HCT116 (cell line): ENCODE measurements at regions of chr17 and their contacts with region 1.

Region 1: GRCh38 chr17:68457539-68458259 is 403 bp upstream of the WIPI1 start:
- DNase-seq: peak; percentile 98
- ATAC-seq: peak; percentile 86
- H3K4me3 ChIP-seq: peak overlapping the region; percentile 39 to 57
- H3K27ac ChIP-seq: no peak overlapping the region
- H3K4me1 ChIP-seq: peaks cover 21 to 39% of the 10 kb centered on the region in 2 experiments
- H3K27me3 ChIP-seq: no peaks in the 10 kb centered on the region
- CTCF ChIP-seq: no peak
- POLR2A ChIP-seq: no peak
- RAD21 ChIP-seq: no peak

Region 2: DNA sequence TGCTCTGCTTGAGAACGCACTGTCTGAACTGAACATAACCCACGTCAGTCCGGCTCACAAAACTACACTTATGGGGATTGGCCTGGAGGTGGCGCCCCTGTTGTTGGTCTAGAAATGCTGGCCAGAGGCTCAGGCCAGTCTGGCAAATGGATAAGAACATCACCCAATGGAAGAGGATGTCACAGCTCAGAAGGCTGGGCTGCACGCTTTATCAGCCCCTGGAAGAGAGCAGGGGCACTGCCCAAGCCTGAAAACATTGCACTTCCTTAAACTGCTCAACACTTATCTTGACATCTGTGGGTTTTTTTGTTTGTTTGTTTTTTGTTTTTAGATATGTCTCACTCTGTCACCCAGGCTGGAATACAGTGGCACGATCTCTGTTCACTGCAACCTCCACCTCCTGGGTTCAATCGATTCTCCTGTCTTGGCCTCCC is 657.2 kb before region 1 on chr17:
- CTCF ChIA-PET with region 1: no interaction called
- POLR2A ChIA-PET with region 1: no interaction called
- RAD21 ChIA-PET with region 1: no interaction called
- intact Hi-C with region 1: loop called (anchors 10 kb)
- DNase-seq: peak; percentile 83
- ATAC-seq: peak; percentile 98
- H3K4me3 ChIP-seq: no peak overlapping the region
- H3K27ac ChIP-seq: no peak overlapping the region
- H3K4me1 ChIP-seq: no peaks in the 10 kb centered on the region
- H3K27me3 ChIP-seq: no peaks in the 10 kb centered on the region
- CTCF ChIP-seq: peak; percentile 90 to 96 (median 91)
- POLR2A ChIP-seq: no peak
- RAD21 ChIP-seq: peak; percentile 94

Region 3: DNA sequence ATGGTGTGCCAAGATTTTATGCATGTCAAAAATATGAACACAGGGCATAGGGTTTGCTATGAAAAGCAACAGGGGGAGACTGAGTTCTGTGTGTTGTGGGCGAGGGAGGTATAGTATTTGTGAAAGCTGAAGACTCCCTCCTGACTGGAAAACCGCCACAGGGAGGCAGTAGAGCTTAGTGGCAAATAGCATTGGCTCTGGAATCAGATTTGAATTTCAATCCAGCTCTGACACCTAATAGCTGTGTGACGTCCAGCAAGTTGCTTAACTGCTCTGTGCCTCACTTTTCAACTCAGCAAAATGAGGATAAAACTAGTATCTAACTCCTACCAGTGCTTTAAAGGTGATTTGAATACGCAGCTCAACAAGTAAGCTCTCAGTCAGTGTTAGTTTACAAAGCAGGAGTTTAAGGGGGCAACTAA is 400.2 kb before region 1 on chr17:
- CTCF ChIA-PET with region 1: no interaction called
- POLR2A ChIA-PET with region 1: no interaction called
- RAD21 ChIA-PET with region 1: no interaction called
- intact Hi-C with region 1: loop called (anchors 2 kb)
- DNase-seq: peak; percentile 32
- ATAC-seq: peak; percentile 89
- H3K4me3 ChIP-seq: no peak overlapping the region
- H3K27ac ChIP-seq: no peak overlapping the region
- H3K4me1 ChIP-seq: peaks cover 0 to 11% of the 10 kb centered on the region in 2 experiments; a peak in 2 of 4 replicates
- H3K27me3 ChIP-seq: no peaks in the 10 kb centered on the region
- CTCF ChIP-seq: peak; percentile 55 to 72 (median 63)
- POLR2A ChIP-seq: no peak
- RAD21 ChIP-seq: peak; percentile 73

Region 4: GRCh38 chr17:68172461-68172954 is 285.2 kb before region 1 on chr17:
- CTCF ChIA-PET with region 1: interaction called, 12 read pairs
- POLR2A ChIA-PET with region 1: no interaction called
- RAD21 ChIA-PET with region 1: interaction called in 1 of 2 experiments, 5 read pairs
- intact Hi-C with region 1: no loop called
- DNase-seq: peak; percentile 63
- ATAC-seq: peak; percentile 88
- H3K4me3 ChIP-seq: no peak overlapping the region
- H3K27ac ChIP-seq: no peak overlapping the region
- H3K4me1 ChIP-seq: peaks cover 0 to 12% of the 10 kb centered on the region in 2 experiments; a peak in 3 of 4 replicates
- H3K27me3 ChIP-seq: no peaks in the 10 kb centered on the region
- CTCF ChIP-seq: peak; percentile 97 to 100 (median 99)
- POLR2A ChIP-seq: no peak
- RAD21 ChIP-seq: peak; percentile 100